ENCODE measurements at regions of chr10 and their contacts with region 1.

Region 1: DNA sequence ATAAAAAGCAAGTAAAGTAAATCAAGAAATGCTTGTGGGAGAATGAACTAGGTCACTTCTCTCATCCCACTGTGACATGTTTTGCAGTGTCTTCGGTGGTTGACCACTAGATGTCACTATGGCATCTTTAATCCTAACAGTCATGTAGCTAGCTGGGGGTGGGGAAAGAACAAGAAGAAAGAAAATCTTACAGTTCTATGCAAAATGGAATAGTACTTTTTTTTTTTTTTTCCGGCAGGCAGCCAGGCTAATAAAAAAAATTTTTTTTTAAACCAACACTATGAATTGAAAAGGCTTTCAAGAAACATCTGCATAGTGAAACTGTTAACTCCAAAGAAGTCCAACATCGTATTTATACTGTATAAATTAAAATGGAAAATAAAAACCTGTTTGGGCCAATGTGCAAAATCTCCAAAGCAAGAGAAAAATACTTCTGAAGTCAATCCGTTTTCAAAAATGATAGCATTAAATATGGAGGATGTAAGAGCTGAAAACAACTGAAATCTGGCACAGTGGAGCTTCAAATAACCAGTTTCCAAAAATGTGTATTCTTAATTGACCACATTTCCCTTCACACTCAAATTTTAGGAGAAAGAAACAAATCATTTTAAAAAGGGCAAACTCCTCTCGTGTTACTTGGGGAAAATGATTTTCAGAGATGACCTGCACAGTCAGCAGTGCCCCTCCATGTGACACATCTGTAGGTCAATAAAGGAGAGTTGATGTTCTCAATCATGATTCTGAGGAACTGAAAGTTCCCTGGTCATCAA is 38.5 kb downstream of the CDK1 start:
- DNase-seq: no peak

Region 2: GRCh38 chr10:60704480-60704879 is 112.3 kb before region 1 on chr10:
- intact Hi-C with region 1: no loop called
- DNase-seq: no peak

Region 3: DNA sequence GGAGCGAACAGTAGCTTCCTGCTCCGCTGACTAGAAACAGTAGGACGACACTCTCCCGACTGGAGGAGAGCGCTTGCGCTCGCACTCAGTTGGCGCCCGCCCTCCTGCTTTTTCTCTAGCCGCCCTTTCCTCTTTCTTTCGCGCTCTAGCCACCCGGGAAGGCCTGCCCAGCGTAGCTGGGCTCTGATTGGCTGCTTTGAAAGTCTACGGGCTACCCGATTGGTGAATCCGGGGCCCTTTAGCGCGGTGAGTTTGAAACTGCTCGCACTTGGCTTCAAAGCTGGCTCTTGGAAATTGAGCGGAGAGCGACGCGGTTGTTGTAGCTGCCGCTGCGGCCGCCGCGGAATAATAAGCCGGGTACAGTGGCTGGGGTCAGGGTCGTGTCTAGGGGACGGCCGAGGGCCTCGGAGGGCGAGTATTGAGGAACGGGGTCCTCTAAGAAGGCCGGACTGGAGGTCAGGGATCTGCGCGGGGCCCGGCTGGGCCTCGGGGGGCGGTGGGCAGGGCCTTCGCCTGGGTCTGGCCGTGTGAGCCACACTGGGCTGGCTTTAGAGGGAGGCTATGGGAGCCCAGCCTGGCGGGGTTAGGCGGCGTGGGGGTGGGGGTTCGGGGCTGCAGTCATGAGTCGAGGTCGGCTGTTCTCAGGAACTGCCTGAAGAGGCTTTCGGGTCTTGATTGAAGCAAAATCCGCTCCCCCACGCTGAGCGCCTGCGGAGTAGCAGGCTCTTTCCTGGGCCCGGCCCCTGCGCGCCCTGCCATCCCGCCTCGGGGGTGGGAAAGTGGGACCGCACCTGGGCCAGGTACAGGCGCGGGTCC is 38.4 kb before region 1 on chr10 and contains the start of gene CDK1:
- intact Hi-C with region 1: no loop called
- DNase-seq: peak; percentile 97
- total RNA-seq, gene CDK1: 0.35 TPM

Region 4: DNA sequence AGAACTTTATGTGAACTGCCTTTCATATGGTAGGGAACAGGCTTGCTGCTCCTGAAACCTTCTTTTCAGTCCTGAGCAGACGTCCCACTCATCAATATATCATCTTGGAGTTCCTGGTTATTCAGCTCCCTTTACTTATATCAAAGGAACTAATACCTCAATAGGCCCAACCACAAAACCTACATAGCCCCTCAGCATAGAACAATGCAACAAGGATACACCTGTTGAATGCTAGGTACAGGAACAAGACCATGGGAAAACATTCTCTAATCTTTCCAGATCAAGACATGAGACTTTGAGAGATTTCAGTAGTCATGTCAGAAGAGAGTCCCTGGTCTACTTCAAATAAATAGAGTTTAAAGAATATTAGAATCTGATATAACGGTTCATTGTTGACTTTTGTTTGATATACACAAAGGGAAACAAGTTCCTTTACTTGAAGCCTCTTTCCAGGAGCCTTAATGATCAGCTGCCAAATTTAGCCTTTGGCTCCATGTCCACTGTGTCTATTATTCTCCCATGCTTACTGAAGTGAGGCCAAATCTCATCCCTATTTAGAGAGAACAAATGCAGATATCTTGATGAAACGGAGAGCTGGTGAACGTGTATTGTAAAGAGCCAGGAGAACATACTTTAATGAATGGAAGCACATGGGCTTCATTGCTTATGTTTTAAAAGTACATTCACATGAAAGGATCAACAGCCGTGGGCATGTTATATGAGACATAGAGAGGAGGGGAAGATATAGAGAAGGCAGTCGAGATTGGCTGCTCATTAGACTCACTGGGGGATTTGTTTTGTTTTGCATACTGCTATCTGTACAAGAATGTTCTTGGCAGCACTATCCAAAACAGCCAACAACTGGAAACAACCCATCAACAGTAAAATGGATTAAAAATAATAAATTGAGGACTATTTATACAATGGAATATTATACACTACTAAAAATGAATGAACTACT is 117.7 kb after region 1 on chr10:
- intact Hi-C with region 1: no loop called
- DNase-seq: no peak

Region 5: GRCh38 chr10:60964257-60965235 is 147.7 kb after region 1 on chr10:
- intact Hi-C with region 1: loop called (anchors 2 kb)
- DNase-seq: peak; percentile 75

Region 6: DNA sequence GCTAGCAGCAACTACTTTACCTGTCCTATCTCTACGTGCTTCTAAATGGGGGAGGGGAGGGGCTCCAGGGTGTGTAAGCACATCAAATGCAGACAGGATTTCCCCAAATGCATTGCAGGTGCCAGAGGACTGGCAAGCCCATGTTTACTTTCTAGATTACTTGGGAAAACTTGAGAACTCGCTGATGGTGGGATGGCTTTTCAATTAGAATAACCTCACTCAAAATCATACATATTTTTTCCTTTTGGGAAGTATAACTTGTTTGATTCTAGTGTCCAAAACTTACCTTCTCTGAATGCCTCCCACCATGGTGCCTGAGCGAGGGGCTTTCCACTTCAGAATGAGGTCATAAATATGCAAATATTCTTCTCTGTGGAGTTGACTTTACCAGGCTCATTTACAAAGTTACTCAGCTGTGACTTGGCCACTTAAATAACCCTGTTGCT is 318.5 kb after region 1 on chr10:
- intact Hi-C with region 1: loop called (anchors 10 kb)
- DNase-seq: no peak

Region 7: GRCh38 chr10:61188691-61189090 is 371.9 kb after region 1 on chr10:
- intact Hi-C with region 1: loop called (anchors 5 kb)
- DNase-seq: no peak

Region 8: GRCh38 chr10:61284222-61284890 is 467.5 kb after region 1 on chr10:
- intact Hi-C with region 1: loop called (anchors 5 kb)
- DNase-seq: no peak

Region 9: GRCh38 chr10:61733358-61733940 is 916.6 kb after region 1 on chr10:
- intact Hi-C with region 1: loop called (anchors 10 kb)
- DNase-seq: no peak